ENCODE measurements at regions of chr2 and their contacts with region 1.

Region 1: DNA sequence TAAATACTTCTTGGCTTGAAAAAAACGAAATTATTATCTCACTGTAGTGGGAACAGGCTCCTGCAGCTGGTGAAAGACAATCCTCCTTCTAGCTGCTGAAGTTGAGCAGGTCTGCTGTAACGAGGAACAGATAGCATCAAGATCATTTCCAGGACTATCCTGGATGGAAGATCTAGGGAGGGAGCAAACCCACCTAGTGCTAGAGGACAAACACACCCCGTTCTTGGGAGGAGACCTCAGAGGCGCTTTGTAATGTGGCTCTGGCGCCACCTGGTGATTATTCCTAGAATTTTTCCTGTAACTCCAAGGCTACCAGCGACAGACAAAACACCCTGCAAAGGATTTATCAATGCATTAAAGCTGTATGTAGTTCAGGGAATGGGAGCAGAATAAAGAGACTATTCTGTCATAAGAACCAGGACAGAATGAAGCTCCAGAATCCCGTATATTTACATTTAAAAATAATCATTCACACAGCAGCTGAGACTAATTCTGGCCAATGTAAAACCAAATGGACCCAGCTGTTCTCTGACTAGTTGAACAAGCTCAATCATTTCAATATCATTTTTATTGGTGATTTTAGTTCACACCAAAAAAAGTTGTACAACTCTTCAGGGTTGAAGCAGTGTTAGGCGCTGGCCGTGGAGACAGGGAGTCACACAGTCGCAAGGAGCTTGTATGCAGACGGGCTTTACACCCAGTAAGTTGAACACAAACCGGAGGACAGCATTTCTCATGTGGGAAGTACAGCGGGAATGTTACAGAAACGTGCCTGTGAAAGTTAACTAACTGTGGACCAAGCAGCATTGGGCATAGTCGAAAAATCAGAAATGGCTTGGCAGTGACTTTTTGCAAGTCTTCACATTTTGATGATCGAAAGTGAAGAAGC is 290.3 kb downstream of the TRIB2 start:
- DNase-seq: peak; percentile 70
- ATAC-seq: peak; percentile 84
- H3K4me3 Mint-ChIP-seq: no peak overlapping the region
- H3K27ac Mint-ChIP-seq: no peak overlapping the region
- H3K4me1 Mint-ChIP-seq: peaks cover 2% of the 10 kb centered on the region
- H3K27me3 Mint-ChIP-seq: peaks cover 26% of the 10 kb centered on the region

Region 2: GRCh38 chr2:11829947-11830707 is 1176.9 kb before region 1 on chr2:
- CTCF ChIA-PET with region 1: interaction called, 15 read pairs
- DNase-seq: peak; percentile 78
- ATAC-seq: peak; percentile 89
- H3K4me3 Mint-ChIP-seq: peak overlapping the region; percentile 45
- H3K27ac Mint-ChIP-seq: peak overlapping the region; percentile 44
- H3K4me1 Mint-ChIP-seq: peaks cover 36% of the 10 kb centered on the region
- H3K27me3 Mint-ChIP-seq: peaks cover 45% of the 10 kb centered on the region

Region 3: DNA sequence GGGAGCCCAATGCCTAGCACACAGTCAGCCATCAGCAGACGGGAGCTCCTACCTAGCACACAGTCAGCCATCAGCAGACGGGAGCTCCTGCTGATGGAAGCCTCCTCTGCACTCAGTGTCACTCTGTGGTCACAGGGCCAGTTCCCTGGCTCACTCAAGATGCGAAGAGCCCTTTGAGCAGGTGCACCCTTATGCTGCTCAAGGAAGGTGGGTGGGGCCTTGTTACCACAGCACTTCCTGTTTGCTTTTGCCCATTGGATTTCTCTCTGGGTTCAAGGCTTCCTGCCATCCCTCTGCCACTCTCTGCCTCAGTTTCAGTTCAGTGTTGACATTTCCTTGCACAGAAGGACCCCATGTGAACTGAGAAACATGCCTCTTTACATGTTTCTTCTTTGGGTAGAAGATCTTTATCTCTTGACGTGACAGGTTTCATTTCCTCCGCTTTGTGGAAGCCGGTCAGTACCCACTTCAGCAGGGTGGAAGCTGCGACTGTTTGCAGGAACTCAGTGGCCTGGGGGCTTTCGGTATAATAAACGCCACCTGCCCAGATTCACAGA is 278.8 kb before region 1 on chr2:
- CTCF ChIA-PET with region 1: interaction called, 22 read pairs
- DNase-seq: peak; percentile 89
- ATAC-seq: peak; percentile 86
- H3K4me3 Mint-ChIP-seq: peak overlapping the region; percentile 51
- H3K27ac Mint-ChIP-seq: peak overlapping the region; percentile 76
- H3K4me1 Mint-ChIP-seq: peaks cover 49% of the 10 kb centered on the region
- H3K27me3 Mint-ChIP-seq: no peaks in the 10 kb centered on the region

Region 4: DNA sequence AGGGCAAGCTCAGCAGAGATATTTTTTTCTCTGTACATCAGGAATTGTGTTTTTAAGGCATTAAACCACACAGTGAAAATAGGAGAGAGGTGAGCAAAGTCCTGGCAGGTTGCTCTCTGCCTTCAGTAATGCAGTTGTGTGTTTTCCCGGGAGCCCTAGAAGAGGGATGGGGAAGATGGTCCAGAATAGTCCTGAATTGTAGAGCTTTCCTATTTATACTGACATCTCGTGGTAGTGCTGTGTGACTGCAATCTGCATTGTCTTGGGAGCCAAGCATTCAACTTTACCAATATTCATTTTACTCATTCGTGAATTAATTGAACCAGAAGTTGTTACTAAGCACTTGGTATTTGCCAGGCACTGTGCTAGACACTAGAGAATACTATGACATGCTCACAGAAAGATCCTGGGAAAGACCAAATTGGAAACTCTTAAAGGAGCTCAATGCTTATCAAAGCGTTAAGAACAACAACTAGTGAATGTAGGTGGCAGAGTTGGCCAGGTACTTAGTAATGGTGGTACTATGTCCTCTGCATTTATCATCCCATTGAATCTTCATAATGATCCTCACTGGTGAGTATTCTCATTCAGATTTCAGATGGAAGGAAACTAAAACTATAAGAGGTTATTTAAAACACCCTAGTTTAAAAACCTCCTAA is 75.8 kb before region 1 on chr2:
- CTCF ChIA-PET with region 1: interaction called, 16 read pairs
- DNase-seq: no peak
- ATAC-seq: peak; percentile 55
- H3K4me3 Mint-ChIP-seq: no peak overlapping the region
- H3K27ac Mint-ChIP-seq: no peak overlapping the region
- H3K4me1 Mint-ChIP-seq: no peaks in the 10 kb centered on the region
- H3K27me3 Mint-ChIP-seq: peaks cover 39% of the 10 kb centered on the region

Region 5: GRCh38 chr2:12965540-12966269 is 41.4 kb before region 1 on chr2:
- CTCF ChIA-PET with region 1: interaction called, 11 read pairs
- DNase-seq: no peak
- ATAC-seq: peak; percentile 97
- H3K4me3 Mint-ChIP-seq: no peak overlapping the region
- H3K27ac Mint-ChIP-seq: peak overlapping the region; percentile 80
- H3K4me1 Mint-ChIP-seq: peaks cover 31% of the 10 kb centered on the region
- H3K27me3 Mint-ChIP-seq: peaks cover 53% of the 10 kb centered on the region

Region 6: GRCh38 chr2:12990523-12990922 is 16.6 kb before region 1 on chr2:
- CTCF ChIA-PET with region 1: interaction called, 15 read pairs
- DNase-seq: no peak
- ATAC-seq: no peak
- H3K4me3 Mint-ChIP-seq: no peak overlapping the region
- H3K27ac Mint-ChIP-seq: no peak overlapping the region
- H3K4me1 Mint-ChIP-seq: peaks cover 6% of the 10 kb centered on the region
- H3K27me3 Mint-ChIP-seq: peaks cover 11% of the 10 kb centered on the region